GM12878 (cell line): ENCODE measurements at regions of chr10 and their contacts with region 1.

Region 1: GRCh38 chr10:113626809-113627370 is 37.0 kb downstream of the NRAP start:
- DNase-seq: no peak
- ATAC-seq: no peak
- H3K4me3 ChIP-seq: no peak overlapping the region
- H3K27ac ChIP-seq: no peak overlapping the region
- H3K4me1 ChIP-seq: no peaks in the 10 kb centered on the region
- H3K27me3 ChIP-seq: peaks cover 3% of the 10 kb centered on the region in 2 experiments; a peak in 2 of 4 replicates
- CTCF ChIP-seq: no peak
- EP300 ChIP-seq: no peak
- POLR2A ChIP-seq: no peak
- RAD21 ChIP-seq: no peak

Region 2: GRCh38 chr10:113550365-113550764 is 76.5 kb before region 1 on chr10:
- CTCF ChIA-PET with region 1: no interaction called
- POLR2A ChIA-PET with region 1: no interaction called
- RAD21 ChIA-PET with region 1: no interaction called
- SMC1A ChIA-PET with region 1: no interaction called
- in situ Hi-C with region 1: no loop called
- intact Hi-C with region 1: no loop called
- DNase-seq: no peak
- ATAC-seq: no peak
- H3K4me3 ChIP-seq: no peak overlapping the region
- H3K27ac ChIP-seq: no peak overlapping the region
- H3K4me1 ChIP-seq: no peaks in the 10 kb centered on the region; the same call in 1 of the 2 replicates
- H3K27me3 ChIP-seq: peaks cover 0 to 3% of the 10 kb centered on the region in 2 experiments; a peak in 2 of 4 replicates
- CTCF ChIP-seq: no peak
- EP300 ChIP-seq: no peak
- POLR2A ChIP-seq: no peak
- RAD21 ChIP-seq: no peak

Region 3: DNA sequence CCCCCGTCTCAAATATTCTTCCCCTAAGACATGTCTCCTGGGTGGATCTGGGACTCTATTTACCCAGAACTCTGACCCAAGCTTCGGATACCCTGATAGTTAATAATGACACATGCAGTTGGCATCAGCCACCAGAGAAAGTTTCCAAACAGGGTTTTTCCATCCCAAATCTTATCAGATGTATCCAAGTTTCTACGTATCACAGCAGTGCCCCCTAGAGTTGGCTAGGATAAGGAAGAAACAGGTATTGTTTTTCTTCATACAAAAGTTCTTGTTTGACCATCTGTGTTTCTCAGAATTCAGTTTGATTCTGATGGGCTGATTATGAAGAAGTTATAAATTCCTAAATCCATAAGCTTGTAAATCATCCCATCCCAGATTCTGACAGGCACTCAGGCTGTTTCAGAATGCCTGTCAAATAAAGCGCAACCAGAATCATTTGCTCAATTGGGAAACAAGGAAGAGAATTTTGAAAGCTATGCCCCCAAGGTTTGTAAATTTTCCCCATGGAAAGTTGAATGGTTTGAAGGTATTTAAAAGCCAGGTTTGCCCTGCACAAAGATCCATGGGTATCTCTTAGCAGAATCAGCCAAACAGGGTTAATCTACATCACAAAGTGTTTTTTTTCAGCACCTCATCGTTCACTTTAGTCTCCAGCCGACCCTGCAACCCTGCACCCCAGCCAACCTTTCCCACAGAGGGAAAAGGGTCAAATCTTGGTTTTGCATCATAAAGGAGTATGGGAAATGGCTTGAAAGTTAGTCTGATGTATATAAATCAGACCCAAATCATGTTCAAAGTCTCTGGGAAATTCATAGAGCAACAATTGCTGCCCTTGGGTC is 10.4 kb before region 1 on chr10:
- CTCF ChIA-PET with region 1: interaction called, 11 read pairs
- POLR2A ChIA-PET with region 1: no interaction called
- RAD21 ChIA-PET with region 1: no interaction called
- SMC1A ChIA-PET with region 1: no interaction called
- in situ Hi-C with region 1: no loop called
- intact Hi-C with region 1: no loop called
- DNase-seq: no peak
- ATAC-seq: no peak
- H3K4me3 ChIP-seq: no peak overlapping the region
- H3K27ac ChIP-seq: no peak overlapping the region
- H3K4me1 ChIP-seq: no peaks in the 10 kb centered on the region
- H3K27me3 ChIP-seq: no peaks in the 10 kb centered on the region; a peak in 4 of 4 replicates
- CTCF ChIP-seq: peak; percentile 13 to 34 (median 31); a peak in 5 of 6 replicates
- EP300 ChIP-seq: no peak
- POLR2A ChIP-seq: no peak
- RAD21 ChIP-seq: 0 out of 2 replicates have a peak, but pooled peaks have one; percentile 12